Activated B cell treated with CpG ODN at 0.5 μM for 24 hours (primary cell): ENCODE measurements at regions of chr1 and their contacts with region 1.

Region 1: DNA sequence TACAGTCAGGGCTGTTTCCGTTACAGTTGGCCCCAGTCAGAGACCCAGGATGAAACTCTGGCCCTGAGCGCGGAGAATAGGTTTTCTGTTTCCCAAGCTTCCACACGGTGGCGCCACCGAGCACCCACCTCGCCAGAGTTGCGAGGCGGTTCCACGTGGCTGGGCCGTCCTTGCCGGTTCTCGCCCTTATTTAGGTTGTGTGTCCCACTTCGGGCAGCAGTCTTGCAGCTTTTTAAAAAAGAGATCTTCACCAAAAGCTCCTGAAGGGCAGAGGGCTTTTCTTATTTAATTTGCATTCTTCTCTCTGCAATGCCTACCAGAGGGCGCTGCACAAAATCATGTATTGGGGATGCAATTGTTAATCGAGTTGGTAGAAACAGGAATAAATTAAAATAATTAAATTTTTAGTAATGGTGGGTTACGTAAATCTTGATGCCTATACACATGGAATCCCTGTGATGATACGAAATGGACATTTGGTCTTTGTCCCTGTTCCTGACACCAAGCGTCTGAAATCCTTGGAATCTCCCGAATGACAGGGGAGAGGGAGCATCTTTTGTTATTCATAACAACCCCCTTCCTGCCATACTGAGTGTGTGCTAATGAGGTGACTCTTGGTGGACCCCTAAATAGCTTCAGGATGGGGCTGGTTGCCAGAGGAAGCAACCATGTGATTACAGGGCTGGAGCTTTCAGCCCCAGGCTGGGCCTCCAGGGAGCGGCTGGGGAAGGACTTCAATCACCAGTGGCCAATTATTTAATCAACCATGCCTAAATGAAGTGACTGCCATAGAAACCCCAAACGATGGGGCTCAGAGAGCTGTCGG is 5.6 kb upstream of the S100A7 start:
- DNase-seq: peak; percentile 47
- ATAC-seq: peak; percentile 60
- H3K4me3 Mint-ChIP-seq: no peak overlapping the region
- H3K27ac Mint-ChIP-seq: no peak overlapping the region
- H3K4me1 Mint-ChIP-seq: peaks cover 2% of the 10 kb centered on the region
- H3K27me3 Mint-ChIP-seq: peaks cover 41% of the 10 kb centered on the region
- CTCF ChIP-seq: no peak

Region 2: DNA sequence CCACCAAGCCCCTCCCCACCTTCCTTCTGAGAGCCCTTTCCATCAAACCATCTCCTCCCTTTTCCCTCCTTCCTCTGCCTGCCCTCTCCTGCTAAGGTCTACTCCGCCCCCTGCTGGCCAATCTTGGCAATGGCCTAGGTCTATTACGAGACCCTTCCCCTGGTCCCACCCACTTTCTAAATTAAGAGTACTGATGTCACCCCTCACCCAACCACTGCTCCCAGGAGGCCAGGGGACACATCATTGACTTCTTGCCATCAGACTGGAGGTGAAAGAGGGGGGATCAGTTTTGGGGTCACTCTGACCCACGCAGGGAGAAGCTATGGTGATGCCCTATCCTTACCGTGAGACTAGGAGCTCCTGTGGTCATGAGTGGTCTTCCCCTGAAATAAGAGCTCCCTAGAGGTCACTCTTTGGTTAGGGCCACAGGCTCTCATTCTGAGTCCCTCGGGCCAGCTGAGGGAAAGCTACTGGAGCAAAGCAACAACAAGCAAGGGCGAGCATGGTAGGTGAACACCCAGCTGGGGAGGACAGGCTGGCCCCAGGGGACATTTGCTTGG is 29.0 kb after region 1 on chr1:
- CTCF ChIA-PET with region 1: interaction called, 12 read pairs
- POLR2A ChIA-PET with region 1: no interaction called
- intact Hi-C with region 1: loop called (anchors 1 kb)
- DNase-seq: peak; percentile 69
- ATAC-seq: peak; percentile 89
- H3K4me3 Mint-ChIP-seq: no peak overlapping the region
- H3K27ac Mint-ChIP-seq: peak overlapping the region; percentile 39
- H3K4me1 Mint-ChIP-seq: peaks cover 11% of the 10 kb centered on the region
- H3K27me3 Mint-ChIP-seq: peaks cover 22% of the 10 kb centered on the region
- CTCF ChIP-seq: peak; percentile 74

Region 3: DNA sequence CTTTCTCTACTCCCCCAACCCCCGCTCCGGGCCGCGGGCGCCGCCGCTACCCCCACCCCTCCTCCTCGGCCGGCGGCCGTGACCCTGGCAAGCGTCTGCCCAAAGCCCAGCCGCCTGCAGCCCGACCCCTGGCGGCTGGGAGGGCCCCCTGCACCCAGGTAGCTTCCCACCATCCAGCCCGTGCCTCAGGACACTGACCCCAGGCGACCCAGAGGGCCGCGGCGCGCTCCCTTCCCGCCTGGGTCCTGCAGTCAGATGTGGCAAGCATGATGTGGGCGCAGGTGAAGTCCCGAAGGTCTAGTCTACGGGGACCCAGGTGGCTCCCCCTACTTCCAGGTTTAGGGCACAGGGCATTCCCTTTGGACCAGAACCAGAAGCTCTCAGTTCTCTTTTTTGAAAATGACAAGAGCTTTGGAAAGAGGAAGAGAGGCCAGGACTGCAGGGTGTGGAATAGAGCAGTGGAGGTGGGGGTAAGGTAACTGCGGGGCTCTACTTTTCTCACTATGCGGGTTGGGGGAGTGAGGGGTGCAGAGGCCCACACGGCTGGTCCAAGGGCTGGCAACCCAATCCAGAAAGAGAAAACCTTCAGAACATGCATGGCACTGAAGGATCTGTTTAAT is 480.7 kb after region 1 on chr1 and contains the start of gene DENND4B:
- CTCF ChIA-PET with region 1: no interaction called
- POLR2A ChIA-PET with region 1: no interaction called
- intact Hi-C with region 1: no loop called
- DNase-seq: peak; percentile 74
- ATAC-seq: peak; percentile 54
- H3K4me3 Mint-ChIP-seq: peak within 1 kb of the TSS; percentile 90
- H3K27ac Mint-ChIP-seq: peak within 1 kb of the TSS; percentile 96
- H3K4me1 Mint-ChIP-seq: peaks cover 71% of the 10 kb centered on the region
- H3K27me3 Mint-ChIP-seq: no peaks in the 10 kb centered on the region
- CTCF ChIP-seq: no peak
- total RNA-seq, gene DENND4B: 217 and 257 TPM in 2 replicates